Colonic mucosa (tissue), 4 donors: ENCODE measurements at regions of chr6 and their contacts with region 1.

Region 1: GRCh38 chr6:152863618-152864326 is 113.2 kb downstream of the VIP start:
- DNase-seq: peak; percentile 71
- H3K4me3 ChIP-seq: no peak overlapping the region
- H3K27ac ChIP-seq: no peak overlapping the region
- H3K4me1 ChIP-seq: no peaks in the 10 kb centered on the region
- H3K27me3 ChIP-seq: no peaks in the 10 kb centered on the region
- CTCF ChIP-seq: peak; percentile 61

Region 2: DNA sequence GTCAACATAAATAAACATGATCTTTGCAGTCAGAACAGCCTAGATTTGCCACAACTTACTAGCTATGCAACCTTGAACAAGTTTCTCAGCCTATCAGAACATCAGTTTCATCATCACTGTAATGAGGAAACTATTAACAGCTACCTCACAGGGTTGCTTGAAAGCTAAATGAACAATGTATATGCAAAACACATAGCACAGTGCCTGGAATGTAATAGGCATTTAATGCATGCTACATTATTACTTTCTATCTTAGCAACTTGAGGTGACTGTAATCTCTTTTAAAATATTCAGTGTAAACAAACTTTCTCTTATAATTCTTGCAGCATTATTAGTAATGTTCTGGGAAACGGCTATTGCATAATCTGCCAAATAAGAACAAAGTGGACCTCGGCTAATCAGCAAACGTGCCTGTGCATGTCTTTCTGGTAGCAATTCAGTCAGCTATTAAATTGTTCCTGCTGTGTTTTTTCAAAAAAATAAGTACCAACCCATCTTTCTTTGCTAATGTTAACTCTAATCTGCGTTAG is 288.1 kb before region 1 on chr6:
- intact Hi-C with region 1: no loop called
- DNase-seq: no peak
- H3K4me3 ChIP-seq: no peak overlapping the region
- H3K27ac ChIP-seq: no peak overlapping the region
- H3K4me1 ChIP-seq: no peaks in the 10 kb centered on the region
- H3K27me3 ChIP-seq: no peaks in the 10 kb centered on the region
- CTCF ChIP-seq: no peak

Region 3: GRCh38 chr6:152948150-152948768 is 84.5 kb after region 1 on chr6:
- intact Hi-C with region 1: loop called (anchors 5 kb)
- DNase-seq: no peak
- H3K4me3 ChIP-seq: no peak overlapping the region
- H3K27ac ChIP-seq: no peak overlapping the region
- H3K4me1 ChIP-seq: no peaks in the 10 kb centered on the region
- H3K27me3 ChIP-seq: no peaks in the 10 kb centered on the region
- CTCF ChIP-seq: peak; percentile 43

Region 4: DNA sequence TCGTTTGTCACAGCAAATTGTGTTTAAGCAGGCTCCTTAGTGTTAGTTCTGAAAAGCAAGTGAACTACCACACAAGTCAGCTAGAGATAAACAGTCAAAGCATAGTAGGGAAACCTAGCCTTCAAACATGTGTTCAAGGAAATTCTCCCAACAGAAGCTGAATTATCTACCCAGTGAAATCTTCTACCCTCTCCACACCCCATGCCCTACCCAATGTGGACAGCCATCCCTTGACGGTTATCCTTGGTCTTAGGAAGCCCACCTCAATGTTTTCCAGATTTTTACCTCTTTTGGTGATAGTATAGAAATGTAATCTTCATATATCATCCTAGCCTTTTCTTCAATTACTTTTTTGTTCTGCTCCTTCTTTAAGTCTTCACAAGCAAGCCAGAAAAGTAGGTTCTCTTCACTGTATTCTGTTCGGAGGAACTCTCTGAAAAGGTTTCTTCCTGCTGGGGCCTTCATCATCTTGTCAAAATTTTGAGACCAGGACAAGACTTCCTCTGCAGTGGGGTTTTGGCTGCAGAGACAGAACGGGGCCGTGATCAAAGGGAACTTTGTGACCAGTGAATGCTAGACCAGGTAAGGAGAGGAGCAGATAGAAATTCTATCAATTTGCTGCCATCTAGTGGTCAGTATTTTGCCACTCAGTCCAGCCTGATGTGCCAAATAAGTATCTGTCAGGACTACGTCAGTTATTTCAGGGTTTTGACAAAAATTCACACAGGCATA is 160.4 kb after region 1 on chr6:
- intact Hi-C with region 1: loop called (anchors 1 kb)
- DNase-seq: peak; percentile 42
- H3K4me3 ChIP-seq: no peak overlapping the region
- H3K27ac ChIP-seq: no peak overlapping the region
- H3K4me1 ChIP-seq: no peaks in the 10 kb centered on the region
- H3K27me3 ChIP-seq: no peaks in the 10 kb centered on the region
- CTCF ChIP-seq: peak; percentile 66